ENCODE measurements at regions of chr10 and their contacts with region 1.

Region 1: GRCh38 chr10:73810735-73811465 is 498 bp downstream of the NDST2 start:
- DNase-seq: no peak
- H3K4me3 ChIP-seq: peak overlapping the region; percentile 79
- CTCF ChIP-seq: no peak

Region 2: DNA sequence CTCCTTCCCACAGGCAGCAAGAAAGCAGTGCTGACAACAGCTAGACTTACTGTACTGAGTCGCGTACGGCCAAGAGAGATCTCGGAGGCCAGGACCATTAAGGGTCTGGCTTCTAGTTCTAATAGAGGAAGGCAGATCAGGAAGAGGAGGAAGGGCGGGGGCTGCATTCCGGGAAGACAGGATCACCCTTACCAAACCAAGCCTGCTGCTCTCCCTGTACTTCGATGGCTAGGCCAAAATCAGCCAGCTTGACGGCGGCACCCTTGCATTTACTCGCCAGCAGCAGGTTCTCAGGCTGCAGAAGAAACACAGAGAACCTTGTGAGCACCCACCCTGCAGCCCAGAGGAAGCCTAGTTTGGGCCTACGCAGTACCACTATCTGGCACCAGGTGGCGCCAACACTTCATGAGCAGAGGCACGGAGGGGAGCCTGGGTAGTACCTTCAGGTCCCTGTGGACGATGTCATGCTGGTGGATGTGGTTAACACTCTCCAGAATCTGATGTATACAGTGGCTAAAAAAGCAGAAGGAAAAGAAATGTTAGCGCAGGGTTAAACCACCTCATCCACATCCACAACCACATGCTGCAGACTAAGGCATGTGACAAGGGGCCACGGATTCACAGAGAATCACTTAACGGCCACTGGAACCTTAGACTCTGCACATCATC is 38.1 kb after region 1 on chr10:
- in situ Hi-C with region 1: loop called (anchors 5 kb)
- DNase-seq: peak; percentile 61
- H3K4me3 ChIP-seq: no peak overlapping the region
- CTCF ChIP-seq: peak; percentile 100

Region 3: GRCh38 chr10:73865459-73866442 is 54.9 kb after region 1 on chr10:
- in situ Hi-C with region 1: no loop called
- DNase-seq: no peak
- H3K4me3 ChIP-seq: no peak overlapping the region
- CTCF ChIP-seq: no peak

Measured in astrocyte of the cerebellum (primary cell).